ENCODE measurements at regions of chr7 and their contacts with region 1.

Region 1: GRCh38 chr7:24812310-24812945 is 55.2 kb upstream of the GSDME start:
- DNase-seq: peak in 5 of 10 donors; percentile 17 to 49 (median 45)
- H3K4me3 ChIP-seq: no peak overlapping the region
- H3K27ac ChIP-seq: no peak overlapping the region
- H3K27me3 ChIP-seq: no peaks in the 10 kb centered on the region
- CTCF ChIP-seq: peak; percentile 74 to 93 (median 86)

Region 2: DNA sequence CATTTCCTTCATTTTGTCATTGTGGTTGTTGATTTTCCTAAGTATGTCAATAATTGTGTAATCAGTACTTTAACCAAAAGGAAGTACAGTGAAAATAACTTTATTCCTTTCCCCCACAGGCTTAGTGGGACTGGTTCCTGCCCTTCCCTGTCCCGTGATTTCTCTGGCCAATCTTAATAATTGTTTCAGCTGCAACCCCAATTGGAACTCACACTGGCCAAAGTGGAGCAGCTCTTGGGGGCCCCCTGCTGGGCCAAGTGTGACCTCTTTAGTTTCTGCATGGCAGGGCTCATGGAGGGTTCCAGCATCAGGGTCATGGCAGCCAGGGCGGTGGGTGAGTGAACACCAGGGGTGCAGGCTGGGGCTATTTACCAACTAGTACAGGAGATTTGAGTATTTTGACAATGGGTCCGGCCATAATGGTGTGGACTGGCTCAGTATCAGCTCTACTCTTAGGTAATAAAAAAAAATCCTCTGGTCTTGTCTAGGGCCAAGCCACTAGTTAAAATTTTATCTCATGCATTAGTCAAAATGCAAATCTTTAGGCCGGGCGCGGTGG is 280.9 kb after region 1 on chr7:
- intact Hi-C with region 1: loop called (anchors 5 kb)
- DNase-seq: peak in 9 of 10 donors; percentile 7 to 64 (median 50)
- H3K4me3 ChIP-seq: no peak overlapping the region
- H3K27ac ChIP-seq: no peak overlapping the region
- H3K27me3 ChIP-seq: no peaks in the 10 kb centered on the region
- CTCF ChIP-seq: peak; percentile 30 to 71 (median 60)

Region 3: DNA sequence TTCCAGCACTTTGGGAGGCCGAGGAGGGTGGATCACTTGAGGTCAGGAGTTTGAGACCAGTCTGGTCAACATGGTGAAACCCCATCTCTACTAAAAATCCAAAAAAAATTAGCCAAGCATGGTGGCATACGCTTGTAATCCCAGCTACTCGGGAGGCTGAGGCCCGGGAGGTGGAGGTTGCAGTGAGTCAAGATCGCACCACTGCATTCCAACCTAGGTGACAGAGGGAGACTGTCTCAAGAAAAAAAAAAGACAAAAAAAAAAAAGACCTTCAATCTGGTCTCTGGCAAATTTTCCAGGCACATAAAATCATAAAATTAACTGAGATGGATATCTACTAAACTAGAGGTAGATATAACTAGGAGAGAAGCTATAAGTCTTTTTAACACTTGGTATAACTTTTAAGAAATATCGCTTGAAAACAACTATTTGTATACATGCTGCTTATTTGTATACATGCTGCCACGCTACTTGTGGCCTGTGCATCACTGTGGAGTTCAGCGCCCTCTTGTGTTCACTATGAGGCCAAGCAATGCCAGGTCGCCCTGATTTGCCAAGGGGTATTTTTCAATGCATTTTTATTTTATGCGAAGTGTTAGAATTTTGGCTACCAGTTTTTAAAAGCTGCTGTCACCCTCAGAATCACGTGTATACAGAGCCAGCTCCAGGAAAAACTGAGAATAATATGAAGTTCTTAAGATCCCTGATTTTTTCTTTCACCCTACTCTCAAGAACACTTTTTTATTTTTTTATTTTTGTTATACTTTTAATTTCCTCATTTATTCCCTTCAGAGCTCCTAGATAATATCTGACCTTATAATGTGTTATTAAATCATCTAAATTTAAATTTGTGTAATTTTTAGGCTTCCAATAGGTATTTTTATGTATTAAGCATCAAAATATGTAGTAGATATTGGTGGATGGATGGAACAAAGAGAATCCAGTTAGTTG is 285.9 kb after region 1 on chr7:
- intact Hi-C with region 1: loop called (anchors 5 kb)
- DNase-seq: peak; percentile 11 to 68 (median 57)
- H3K4me3 ChIP-seq: no peak overlapping the region
- H3K27ac ChIP-seq: no peak overlapping the region
- H3K27me3 ChIP-seq: no peaks in the 10 kb centered on the region
- CTCF ChIP-seq: peak; percentile 56 to 92 (median 83)